Dendritic cell treated with granulocyte-macrophage colony-stimulating factor and Interleukin-4, amounts not matched to agents 40 ng/mL and 50 ng/mL, for 4 days (primary cell): ENCODE measurements at regions of chr1 and their contacts with region 1.

Region 1: DNA sequence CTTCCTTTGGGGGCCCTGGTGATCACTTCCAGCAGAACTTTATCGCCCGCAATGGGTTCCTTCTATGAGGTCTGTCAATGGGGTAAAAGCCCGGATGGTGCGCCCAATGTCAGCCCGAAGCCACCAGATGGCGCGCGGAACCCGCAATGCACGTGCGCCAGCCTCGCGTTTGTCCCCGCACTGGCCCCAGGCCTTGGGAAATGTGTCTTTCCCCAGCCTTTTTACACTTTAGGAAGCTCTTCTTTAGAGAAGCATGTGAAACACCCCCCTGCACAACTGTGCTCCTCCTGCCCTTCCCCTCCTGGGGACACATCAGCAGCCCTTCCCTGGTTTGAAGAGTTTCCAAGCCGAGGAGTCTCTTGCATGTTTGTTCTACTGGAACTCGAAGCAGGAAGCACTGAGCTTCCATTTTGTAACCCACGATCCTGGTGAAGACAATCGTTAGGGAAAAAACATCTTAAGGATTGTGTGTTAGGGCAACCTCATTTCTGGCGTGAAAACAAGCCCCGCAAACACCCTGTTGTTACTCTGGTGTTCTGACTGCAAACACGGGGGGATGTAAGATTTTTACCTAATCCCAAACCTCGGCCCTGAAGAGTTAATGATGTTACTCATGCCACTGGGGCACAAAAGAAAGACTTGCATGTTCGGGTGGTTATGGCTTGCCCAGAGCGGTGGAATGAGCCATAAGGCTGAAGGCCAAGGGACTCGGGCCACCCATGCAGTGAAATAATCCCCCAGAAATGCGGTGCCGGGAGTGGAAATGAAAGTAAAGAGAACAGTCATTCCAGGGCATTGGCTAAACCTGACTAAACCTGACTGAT is 20.4 kb upstream of the TARBP1 start:
- H3K4me3 Mint-ChIP-seq: peak overlapping the region; percentile 60
- H3K27ac Mint-ChIP-seq: peak overlapping the region; percentile 91
- H3K4me1 Mint-ChIP-seq: peaks cover 49% of the 10 kb centered on the region
- H3K27me3 Mint-ChIP-seq: no peaks in the 10 kb centered on the region

Region 2: GRCh38 chr1:234533975-234534876 is 34.9 kb after region 1 on chr1:
- intact Hi-C with region 1: loop called (anchors 5 kb)
- H3K4me3 Mint-ChIP-seq: no peak overlapping the region
- H3K27ac Mint-ChIP-seq: no peak overlapping the region
- H3K4me1 Mint-ChIP-seq: peaks cover 44% of the 10 kb centered on the region
- H3K27me3 Mint-ChIP-seq: no peaks in the 10 kb centered on the region

Region 3: DNA sequence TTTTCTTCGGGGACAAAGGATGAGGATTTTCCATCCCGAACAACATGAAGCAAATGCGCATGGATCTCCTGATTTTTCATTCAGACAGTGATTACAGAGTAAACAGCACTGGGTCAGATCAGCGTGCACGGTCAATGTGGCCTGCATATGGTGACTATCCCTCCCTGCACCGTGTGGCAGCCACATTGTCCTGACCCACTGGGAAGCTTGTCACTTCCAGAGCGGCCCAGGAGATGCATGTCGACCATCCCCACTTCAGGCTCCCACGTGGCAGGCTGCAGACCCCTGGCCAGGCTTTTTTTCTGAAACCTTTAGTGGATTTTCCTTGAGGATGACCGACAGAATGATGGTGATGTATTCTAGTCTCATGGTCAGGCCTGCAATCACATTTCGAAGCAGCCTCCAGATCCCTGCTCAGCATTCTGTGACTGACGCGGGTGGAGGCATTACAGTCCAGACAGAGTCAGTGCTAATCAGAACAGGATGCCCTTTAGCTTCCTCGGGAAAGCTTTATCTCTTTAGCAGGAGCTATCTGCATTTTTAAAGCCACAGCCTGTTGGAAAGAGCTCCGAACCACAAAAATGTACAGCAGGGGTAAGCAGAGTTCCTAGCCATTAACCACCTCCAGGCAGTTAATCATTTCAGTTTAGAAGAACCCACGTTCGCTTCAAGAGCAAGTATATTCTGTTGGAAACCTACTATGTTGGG is 54.0 kb after region 1 on chr1:
- intact Hi-C with region 1: no loop called
- H3K4me3 Mint-ChIP-seq: no peak overlapping the region
- H3K27ac Mint-ChIP-seq: no peak overlapping the region
- H3K4me1 Mint-ChIP-seq: no peaks in the 10 kb centered on the region
- H3K27me3 Mint-ChIP-seq: peaks cover 1% of the 10 kb centered on the region

Region 4: DNA sequence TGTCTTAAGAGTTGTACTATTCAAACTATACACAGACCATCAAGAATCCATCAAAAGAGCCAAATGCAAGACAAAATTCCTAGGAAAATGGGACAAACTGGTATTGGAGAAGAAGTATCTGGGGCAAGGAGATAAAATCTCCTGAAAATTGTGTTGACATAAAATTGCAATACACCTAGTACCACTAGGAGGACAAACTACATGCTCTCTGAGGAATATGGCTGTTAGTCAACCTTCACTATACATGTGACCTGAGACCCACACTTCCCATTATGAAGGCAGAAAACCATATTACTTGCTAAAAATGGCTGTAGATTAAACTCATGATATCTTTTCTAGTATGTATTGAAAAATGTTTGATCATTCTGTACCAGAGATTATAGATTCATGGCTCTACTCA is 80.6 kb after region 1 on chr1:
- intact Hi-C with region 1: loop called (anchors 5 kb)
- H3K4me3 Mint-ChIP-seq: no peak overlapping the region
- H3K27ac Mint-ChIP-seq: no peak overlapping the region
- H3K4me1 Mint-ChIP-seq: peaks cover 17% of the 10 kb centered on the region
- H3K27me3 Mint-ChIP-seq: no peaks in the 10 kb centered on the region

Region 5: GRCh38 chr1:234599617-234600417 is 100.5 kb after region 1 on chr1:
- intact Hi-C with region 1: loop called (anchors 2 kb)
- H3K4me3 Mint-ChIP-seq: peak overlapping the region; percentile 79
- H3K27ac Mint-ChIP-seq: peak overlapping the region; percentile 93
- H3K4me1 Mint-ChIP-seq: peaks cover 35% of the 10 kb centered on the region
- H3K27me3 Mint-ChIP-seq: no peaks in the 10 kb centered on the region